ENCODE measurements at regions of chr12 and their contacts with region 1.

Region 1: DNA sequence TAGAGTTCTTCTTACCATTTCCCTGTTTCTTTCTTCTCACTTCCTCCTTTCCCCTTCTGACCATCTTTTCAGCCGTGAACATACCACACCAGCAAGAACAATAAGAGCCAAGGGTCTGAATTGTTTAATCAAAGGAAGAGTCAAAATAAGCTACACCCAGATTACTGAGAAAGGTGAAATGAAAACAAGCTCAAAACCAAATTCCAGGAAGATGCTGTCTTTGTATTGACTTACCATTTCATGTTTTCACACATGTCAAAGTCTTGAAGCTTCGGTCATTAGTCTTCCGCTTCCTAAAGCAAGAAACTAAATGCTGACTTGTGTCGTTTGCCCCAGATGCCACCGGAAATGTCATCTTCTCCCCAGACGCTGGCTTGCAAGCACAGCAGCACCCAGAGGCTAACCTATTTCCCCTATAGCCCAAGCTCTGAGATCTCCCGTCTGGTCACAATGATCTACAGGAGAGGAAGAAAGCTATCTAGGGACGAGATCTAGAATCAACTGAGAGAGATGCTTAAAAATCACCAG is 136.5 kb upstream of the AMIGO2 start:
- DNase-seq: peak; percentile 87
- H3K4me3 Mint-ChIP-seq: peak overlapping the region; percentile 85
- H3K27ac Mint-ChIP-seq: peak overlapping the region; percentile 96
- H3K4me1 Mint-ChIP-seq: peaks cover 19% of the 10 kb centered on the region
- H3K27me3 Mint-ChIP-seq: no peaks in the 10 kb centered on the region

Region 2: GRCh38 chr12:46217541-46218321 is 998.5 kb before region 1 on chr12:
- CTCF ChIA-PET with region 1: no interaction called
- POLR2A ChIA-PET with region 1: no interaction called
- intact Hi-C with region 1: loop called (anchors 1 kb)
- DNase-seq: peak; percentile 75
- H3K4me3 Mint-ChIP-seq: peak overlapping the region; percentile 61
- H3K27ac Mint-ChIP-seq: peak overlapping the region; percentile 98
- H3K4me1 Mint-ChIP-seq: peaks cover 95% of the 10 kb centered on the region
- H3K27me3 Mint-ChIP-seq: no peaks in the 10 kb centered on the region

Region 3: GRCh38 chr12:46926526-46926925 is 289.7 kb before region 1 on chr12:
- CTCF ChIA-PET with region 1: no interaction called
- POLR2A ChIA-PET with region 1: no interaction called
- intact Hi-C with region 1: no loop called
- DNase-seq: no peak
- H3K4me3 Mint-ChIP-seq: no peak overlapping the region
- H3K27ac Mint-ChIP-seq: no peak overlapping the region
- H3K4me1 Mint-ChIP-seq: no peaks in the 10 kb centered on the region
- H3K27me3 Mint-ChIP-seq: peaks cover 5% of the 10 kb centered on the region

Region 4: GRCh38 chr12:46944088-46944487 is 272.1 kb before region 1 on chr12:
- CTCF ChIA-PET with region 1: no interaction called
- POLR2A ChIA-PET with region 1: no interaction called
- intact Hi-C with region 1: no loop called
- DNase-seq: no peak
- H3K4me3 Mint-ChIP-seq: no peak overlapping the region
- H3K27ac Mint-ChIP-seq: no peak overlapping the region
- H3K4me1 Mint-ChIP-seq: no peaks in the 10 kb centered on the region
- H3K27me3 Mint-ChIP-seq: peaks cover 7% of the 10 kb centered on the region

Region 5: GRCh38 chr12:47276621-47277309 is 60.6 kb after region 1 on chr12:
- CTCF ChIA-PET with region 1: interaction called, 5 read pairs
- POLR2A ChIA-PET with region 1: interaction called, 6 read pairs
- intact Hi-C with region 1: loop called (anchors 2 kb)
- DNase-seq: peak; percentile 70
- H3K4me3 Mint-ChIP-seq: peak overlapping the region; percentile 33
- H3K27ac Mint-ChIP-seq: peak overlapping the region; percentile 95
- H3K4me1 Mint-ChIP-seq: peaks cover 82% of the 10 kb centered on the region
- H3K27me3 Mint-ChIP-seq: no peaks in the 10 kb centered on the region

Region 6: GRCh38 chr12:47356129-47356700 is 140.0 kb after region 1 on chr12:
- CTCF ChIA-PET with region 1: interaction called, 4 read pairs
- POLR2A ChIA-PET with region 1: interaction called, 22 read pairs
- intact Hi-C with region 1: loop called (anchors 1 kb)
- DNase-seq: peak; percentile 50
- H3K4me3 Mint-ChIP-seq: peak overlapping the region; percentile 66
- H3K27ac Mint-ChIP-seq: peak overlapping the region; percentile 99
- H3K4me1 Mint-ChIP-seq: peaks cover 76% of the 10 kb centered on the region
- H3K27me3 Mint-ChIP-seq: no peaks in the 10 kb centered on the region

Region 7: DNA sequence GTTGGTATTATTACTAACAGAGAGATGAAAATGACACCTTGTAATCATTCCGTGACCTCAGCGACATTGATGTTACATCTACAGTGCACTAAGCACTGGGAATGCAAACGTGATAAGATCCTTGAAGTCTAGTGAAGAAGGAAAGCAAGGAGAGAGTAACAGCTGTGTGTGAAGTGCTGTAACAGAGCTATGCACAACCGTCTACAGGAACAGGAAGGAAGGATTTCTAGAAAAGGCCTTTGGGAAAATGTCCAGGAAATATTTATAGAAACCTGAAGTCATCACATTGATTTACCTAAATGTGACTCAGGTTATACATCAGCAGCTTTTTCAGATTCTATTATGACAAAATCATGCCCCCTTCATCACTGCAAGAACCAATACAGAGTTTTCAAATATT is 167.7 kb after region 1 on chr12:
- CTCF ChIA-PET with region 1: no interaction called
- POLR2A ChIA-PET with region 1: no interaction called
- intact Hi-C with region 1: no loop called
- DNase-seq: no peak
- H3K4me3 Mint-ChIP-seq: no peak overlapping the region
- H3K27ac Mint-ChIP-seq: peak overlapping the region; percentile 85
- H3K4me1 Mint-ChIP-seq: peaks cover 73% of the 10 kb centered on the region
- H3K27me3 Mint-ChIP-seq: no peaks in the 10 kb centered on the region

Region 8: GRCh38 chr12:47705566-47706425 is 489.6 kb after region 1 on chr12 and contains the start of gene RPAP3:
- CTCF ChIA-PET with region 1: no interaction called
- POLR2A ChIA-PET with region 1: no interaction called
- intact Hi-C with region 1: loop called (anchors 10 kb)
- DNase-seq: peak; percentile 99
- H3K4me3 Mint-ChIP-seq: peak within 1 kb of the TSS; percentile 96
- H3K27ac Mint-ChIP-seq: peak within 1 kb of the TSS; percentile 95
- H3K4me1 Mint-ChIP-seq: peaks cover 50% of the 10 kb centered on the region
- H3K27me3 Mint-ChIP-seq: no peaks in the 10 kb centered on the region
- total RNA-seq, gene RPAP3: 49.4 to 50.2 TPM

Measured in activated CD4-positive, alpha-beta memory T cell treated with anti-CD3 and anti-CD28 coated beads for 36 hours (primary cell).